MCF 10A (cell line): ENCODE measurements at regions of chr2 and their contacts with region 1.

Region 1: GRCh38 chr2:18987592-18988073 is 370.8 kb downstream of the OSR1 start:
- DNase-seq: peak; percentile 94
- H3K4me3 Mint-ChIP-seq: no peak overlapping the region
- H3K27ac Mint-ChIP-seq: peak overlapping the region; percentile 27
- H3K4me1 Mint-ChIP-seq: peaks cover 17% of the 10 kb centered on the region
- H3K27me3 Mint-ChIP-seq: no peaks in the 10 kb centered on the region
- CTCF ChIP-seq: no peak

Region 2: GRCh38 chr2:18749912-18750526 is 237.6 kb before region 1 on chr2:
- CTCF ChIA-PET with region 1: interaction called, 5 read pairs
- POLR2A ChIA-PET with region 1: interaction called, 6 read pairs
- intact Hi-C with region 1: loop called (anchors 1 kb)
- DNase-seq: peak; percentile 76
- H3K4me3 Mint-ChIP-seq: no peak overlapping the region
- H3K27ac Mint-ChIP-seq: no peak overlapping the region
- H3K4me1 Mint-ChIP-seq: peaks cover 9% of the 10 kb centered on the region
- H3K27me3 Mint-ChIP-seq: no peaks in the 10 kb centered on the region
- CTCF ChIP-seq: peak; percentile 63

Region 3: DNA sequence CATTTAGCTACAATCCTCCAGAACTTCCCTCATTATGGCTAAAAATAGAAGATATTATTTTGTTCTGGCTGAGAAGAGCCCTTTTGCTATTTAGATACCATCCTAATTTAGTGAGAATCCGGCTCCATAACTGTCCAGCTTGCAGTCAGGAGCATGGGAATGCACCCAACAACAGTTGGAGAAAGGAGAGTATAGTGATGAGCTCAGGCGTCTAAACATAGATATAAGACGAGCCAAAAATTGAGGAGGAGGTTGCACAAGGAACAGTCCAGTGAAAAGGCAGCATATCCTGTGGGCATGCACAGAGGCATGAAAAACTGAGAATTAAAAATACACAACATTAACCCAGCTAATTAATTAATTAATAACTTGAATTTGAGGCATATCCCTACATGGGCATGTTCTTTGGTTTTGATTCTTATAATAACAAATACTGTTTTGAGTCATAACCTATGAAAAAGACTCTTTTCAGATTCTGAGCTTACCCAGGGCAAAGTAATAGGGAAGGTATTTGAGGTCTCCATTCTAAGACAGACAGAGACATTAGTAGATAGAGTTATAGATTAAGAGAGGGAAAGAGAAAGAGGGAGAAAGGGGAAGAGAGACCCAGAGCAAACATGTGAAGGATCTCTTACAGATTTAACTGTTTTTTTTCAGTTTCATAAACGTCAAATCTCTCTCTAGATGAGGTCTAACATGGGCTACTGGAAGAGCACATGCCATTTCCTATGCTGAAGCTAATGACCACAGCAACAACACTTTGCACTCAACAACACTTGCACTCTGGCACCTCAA is 59.5 kb after region 1 on chr2:
- CTCF ChIA-PET with region 1: no interaction called
- POLR2A ChIA-PET with region 1: no interaction called
- intact Hi-C with region 1: no loop called
- DNase-seq: no peak
- H3K4me3 Mint-ChIP-seq: no peak overlapping the region
- H3K27ac Mint-ChIP-seq: no peak overlapping the region
- H3K4me1 Mint-ChIP-seq: peaks cover 18% of the 10 kb centered on the region
- H3K27me3 Mint-ChIP-seq: no peaks in the 10 kb centered on the region
- CTCF ChIP-seq: no peak

Region 4: GRCh38 chr2:19073522-19073921 is 85.9 kb after region 1 on chr2:
- CTCF ChIA-PET with region 1: no interaction called
- POLR2A ChIA-PET with region 1: interaction called, 12 read pairs
- intact Hi-C with region 1: no loop called
- DNase-seq: peak; percentile 97
- H3K4me3 Mint-ChIP-seq: no peak overlapping the region
- H3K27ac Mint-ChIP-seq: peak overlapping the region; percentile 77
- H3K4me1 Mint-ChIP-seq: peaks cover 31% of the 10 kb centered on the region
- H3K27me3 Mint-ChIP-seq: no peaks in the 10 kb centered on the region
- CTCF ChIP-seq: no peak

Region 5: DNA sequence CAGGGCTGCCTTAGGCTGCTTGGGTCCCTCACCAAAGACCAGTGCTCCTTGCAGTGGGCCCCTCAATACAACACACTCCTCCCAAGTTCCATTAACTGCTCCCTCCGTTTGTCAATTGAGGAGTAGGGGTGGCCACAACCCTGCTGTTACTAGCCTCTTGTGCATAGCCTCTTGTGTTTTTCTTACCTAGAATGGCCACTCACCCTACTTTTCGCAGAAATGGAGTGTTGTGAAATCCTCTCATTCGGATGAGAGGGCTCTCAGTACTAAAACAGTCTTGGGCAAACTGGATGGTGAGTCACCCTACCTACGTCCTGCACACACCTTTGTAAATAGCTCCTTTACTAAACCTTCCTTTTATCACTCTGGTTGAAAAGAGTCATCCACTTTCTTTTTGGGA is 116.9 kb after region 1 on chr2:
- CTCF ChIA-PET with region 1: no interaction called
- POLR2A ChIA-PET with region 1: interaction called, 11 read pairs
- intact Hi-C with region 1: no loop called
- DNase-seq: peak; percentile 90
- H3K4me3 Mint-ChIP-seq: no peak overlapping the region
- H3K27ac Mint-ChIP-seq: peak overlapping the region; percentile 87
- H3K4me1 Mint-ChIP-seq: peaks cover 13% of the 10 kb centered on the region
- H3K27me3 Mint-ChIP-seq: no peaks in the 10 kb centered on the region
- CTCF ChIP-seq: no peak

Region 6: DNA sequence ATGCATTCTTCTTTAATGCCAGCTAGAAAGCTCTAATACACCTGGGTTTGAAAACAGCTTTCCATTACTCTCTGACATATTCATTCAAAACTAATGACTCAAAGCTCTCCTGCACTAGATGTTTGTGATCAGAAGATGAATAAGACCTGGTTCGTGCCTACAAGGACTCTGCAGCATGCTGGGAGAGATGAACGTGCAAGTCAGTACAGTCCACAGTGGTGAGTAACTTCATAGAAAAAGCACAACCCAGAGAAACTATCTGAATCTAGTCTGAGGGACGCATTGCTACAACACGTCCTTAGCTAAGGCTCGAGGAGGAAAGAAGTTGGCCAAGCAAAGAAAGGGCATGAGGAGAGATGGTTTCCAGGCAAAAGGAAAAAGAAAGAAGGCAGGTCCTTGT is 136.5 kb after region 1 on chr2:
- CTCF ChIA-PET with region 1: interaction called, 5 read pairs
- POLR2A ChIA-PET with region 1: interaction called, 10 read pairs
- intact Hi-C with region 1: no loop called
- DNase-seq: peak; percentile 41
- H3K4me3 Mint-ChIP-seq: peak overlapping the region; percentile 15
- H3K27ac Mint-ChIP-seq: peak overlapping the region; percentile 4
- H3K4me1 Mint-ChIP-seq: peaks cover 39% of the 10 kb centered on the region
- H3K27me3 Mint-ChIP-seq: no peaks in the 10 kb centered on the region
- CTCF ChIP-seq: no peak

Region 7: DNA sequence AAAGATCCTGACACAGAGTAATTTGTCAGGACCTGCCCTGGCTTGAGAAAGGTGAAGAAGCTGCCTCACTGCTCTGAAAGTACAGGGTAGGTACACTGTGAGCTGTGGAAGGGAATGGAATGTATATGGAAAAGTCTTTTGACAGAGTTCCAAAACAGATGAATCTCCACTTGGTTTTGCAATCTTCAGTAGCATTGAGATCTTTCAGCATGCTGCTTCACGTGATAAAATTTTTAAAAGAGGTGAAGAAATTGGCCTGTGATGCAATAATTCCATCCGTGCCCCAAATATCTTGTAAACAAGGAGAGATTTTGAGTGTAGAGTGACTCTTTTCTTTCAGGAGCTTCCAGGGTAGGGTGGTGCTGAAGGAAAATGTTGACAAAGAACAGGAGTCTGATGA is 247.7 kb after region 1 on chr2:
- CTCF ChIA-PET with region 1: interaction called, 3 read pairs
- POLR2A ChIA-PET with region 1: interaction called, 22 read pairs
- intact Hi-C with region 1: loop called (anchors 1 kb)
- DNase-seq: peak; percentile 93
- H3K4me3 Mint-ChIP-seq: peak overlapping the region; percentile 54
- H3K27ac Mint-ChIP-seq: peak overlapping the region; percentile 95
- H3K4me1 Mint-ChIP-seq: peaks cover 44% of the 10 kb centered on the region
- H3K27me3 Mint-ChIP-seq: no peaks in the 10 kb centered on the region
- CTCF ChIP-seq: no peak

Region 8: DNA sequence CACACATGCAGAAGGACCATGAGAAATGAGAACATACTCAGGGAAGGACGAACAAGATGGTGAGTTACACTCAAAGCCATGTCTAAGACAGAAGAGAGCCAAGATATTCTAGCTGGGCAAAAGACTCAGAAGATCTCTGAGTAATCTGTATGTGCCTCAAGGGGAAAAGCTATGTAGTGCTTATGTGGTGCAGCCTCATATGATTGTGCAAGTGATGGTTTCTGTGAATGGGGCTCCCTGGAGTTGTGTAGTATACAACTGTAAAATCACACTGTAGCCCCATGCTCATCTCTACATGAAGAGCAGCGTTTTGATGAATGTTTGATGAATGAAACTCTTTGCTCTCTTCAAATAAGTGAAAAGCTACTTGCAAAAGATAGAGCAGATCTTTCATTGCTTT is 313.3 kb after region 1 on chr2:
- CTCF ChIA-PET with region 1: no interaction called
- POLR2A ChIA-PET with region 1: no interaction called
- intact Hi-C with region 1: no loop called
- DNase-seq: peak; percentile 16
- H3K4me3 Mint-ChIP-seq: no peak overlapping the region
- H3K27ac Mint-ChIP-seq: no peak overlapping the region
- H3K4me1 Mint-ChIP-seq: no peaks in the 10 kb centered on the region
- H3K27me3 Mint-ChIP-seq: no peaks in the 10 kb centered on the region
- CTCF ChIP-seq: no peak

Region 9: GRCh38 chr2:19347619-19348562 is 360.3 kb after region 1 on chr2:
- CTCF ChIA-PET with region 1: interaction called, 12 read pairs
- POLR2A ChIA-PET with region 1: interaction called, 12 read pairs
- intact Hi-C with region 1: loop called (anchors 1 kb)
- DNase-seq: peak; percentile 96
- H3K4me3 Mint-ChIP-seq: peak overlapping the region; percentile 95
- H3K27ac Mint-ChIP-seq: peak overlapping the region; percentile 99
- H3K4me1 Mint-ChIP-seq: no peaks in the 10 kb centered on the region
- H3K27me3 Mint-ChIP-seq: no peaks in the 10 kb centered on the region
- CTCF ChIP-seq: no peak

Region 10: DNA sequence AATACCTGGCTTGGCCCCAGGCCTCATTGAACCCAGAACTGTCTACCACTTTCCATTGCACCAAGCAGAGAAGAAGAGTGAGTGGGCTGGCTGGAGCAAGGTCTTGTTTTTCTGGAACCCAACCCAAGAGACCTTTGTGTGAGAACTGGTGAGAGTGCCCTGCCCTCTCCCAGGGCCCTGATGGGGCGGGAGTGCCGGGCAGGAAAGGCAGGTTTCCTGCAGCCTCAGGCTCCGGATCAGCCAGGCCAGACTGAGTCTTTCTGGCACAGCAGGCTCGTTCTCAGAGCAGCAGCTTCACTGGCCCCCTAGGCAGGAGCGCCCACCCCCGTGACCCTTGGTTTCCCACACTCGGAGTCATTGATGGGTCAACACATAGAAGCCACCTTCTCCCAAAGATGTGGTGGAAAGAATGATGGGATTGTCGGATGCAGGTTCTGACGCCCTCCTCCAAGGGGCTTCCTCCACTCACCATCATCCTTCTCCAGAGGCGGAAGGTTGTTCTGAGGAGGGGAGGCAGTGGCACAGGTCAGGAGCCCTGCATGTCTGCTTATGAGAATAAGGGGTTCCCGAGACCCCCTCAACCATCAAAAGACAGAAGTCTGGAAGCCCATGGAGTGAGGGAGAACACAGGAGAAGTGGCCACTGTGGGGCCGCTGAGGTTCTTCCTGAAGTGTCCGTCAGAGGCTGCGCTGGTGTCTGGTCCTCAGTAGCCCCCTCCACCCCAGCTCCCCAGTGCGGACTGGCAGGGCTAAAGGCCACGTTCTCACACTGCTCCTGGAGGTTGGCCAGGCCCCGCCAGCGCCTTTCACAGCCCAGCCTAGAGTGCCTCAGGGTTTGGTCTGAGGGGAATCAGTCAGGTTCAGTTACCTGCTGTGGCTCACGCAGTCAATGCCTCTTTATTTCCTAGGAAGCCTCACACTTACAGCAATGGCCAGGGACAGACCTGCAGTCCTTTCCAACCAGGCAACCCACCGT is 1126.6 kb after region 1 on chr2:
- CTCF ChIA-PET with region 1: no interaction called
- POLR2A ChIA-PET with region 1: no interaction called
- intact Hi-C with region 1: no loop called
- DNase-seq: no peak
- H3K4me3 Mint-ChIP-seq: no peak overlapping the region
- H3K27ac Mint-ChIP-seq: no peak overlapping the region
- H3K4me1 Mint-ChIP-seq: peaks cover 4% of the 10 kb centered on the region
- H3K27me3 Mint-ChIP-seq: no peaks in the 10 kb centered on the region
- CTCF ChIP-seq: no peak